Mammary epithelial cell (primary cell): ENCODE measurements at regions of chr1 and their contacts with region 1.

Region 1: DNA sequence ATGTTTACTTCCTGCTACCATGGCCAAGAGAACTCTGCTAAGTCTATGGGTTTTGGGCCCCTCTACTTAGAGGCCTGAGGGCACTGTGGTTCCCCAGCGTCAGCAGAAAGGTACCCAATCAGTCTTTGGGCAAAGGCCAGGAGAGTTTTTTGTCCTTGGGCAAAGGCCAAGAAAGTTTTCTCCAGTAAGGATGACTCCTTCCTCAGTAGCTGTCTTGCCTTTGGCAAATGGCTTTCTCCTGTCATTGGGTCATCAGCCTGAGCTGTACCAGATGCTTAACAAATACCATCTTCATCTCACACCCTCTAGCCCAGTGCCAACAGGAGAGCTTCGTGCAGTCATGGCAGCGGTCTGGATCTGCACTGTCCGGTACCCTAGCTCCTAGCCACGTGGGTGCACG is 199.3 kb upstream of the TMEM51 start:
- DNase-seq: peak; percentile 66
- H3K4me3 ChIP-seq: no peak overlapping the region
- H3K27ac ChIP-seq: no peak overlapping the region
- H3K4me1 ChIP-seq: peaks cover 7% of the 10 kb centered on the region
- H3K27me3 ChIP-seq: no peaks in the 10 kb centered on the region
- CTCF ChIP-seq: no peak

Region 2: GRCh38 chr1:14894811-14895560 is 59.2 kb before region 1 on chr1:
- CTCF ChIA-PET with region 1: no interaction called
- dilution Hi-C with region 1: loop called (anchors 5 kb)
- in situ Hi-C with region 1: no loop called
- intact Hi-C with region 1: no loop called
- DNase-seq: no peak
- H3K4me3 ChIP-seq: no peak overlapping the region
- H3K27ac ChIP-seq: no peak overlapping the region
- H3K4me1 ChIP-seq: peaks cover 31% of the 10 kb centered on the region
- H3K27me3 ChIP-seq: no peaks in the 10 kb centered on the region
- CTCF ChIP-seq: no peak

Region 3: DNA sequence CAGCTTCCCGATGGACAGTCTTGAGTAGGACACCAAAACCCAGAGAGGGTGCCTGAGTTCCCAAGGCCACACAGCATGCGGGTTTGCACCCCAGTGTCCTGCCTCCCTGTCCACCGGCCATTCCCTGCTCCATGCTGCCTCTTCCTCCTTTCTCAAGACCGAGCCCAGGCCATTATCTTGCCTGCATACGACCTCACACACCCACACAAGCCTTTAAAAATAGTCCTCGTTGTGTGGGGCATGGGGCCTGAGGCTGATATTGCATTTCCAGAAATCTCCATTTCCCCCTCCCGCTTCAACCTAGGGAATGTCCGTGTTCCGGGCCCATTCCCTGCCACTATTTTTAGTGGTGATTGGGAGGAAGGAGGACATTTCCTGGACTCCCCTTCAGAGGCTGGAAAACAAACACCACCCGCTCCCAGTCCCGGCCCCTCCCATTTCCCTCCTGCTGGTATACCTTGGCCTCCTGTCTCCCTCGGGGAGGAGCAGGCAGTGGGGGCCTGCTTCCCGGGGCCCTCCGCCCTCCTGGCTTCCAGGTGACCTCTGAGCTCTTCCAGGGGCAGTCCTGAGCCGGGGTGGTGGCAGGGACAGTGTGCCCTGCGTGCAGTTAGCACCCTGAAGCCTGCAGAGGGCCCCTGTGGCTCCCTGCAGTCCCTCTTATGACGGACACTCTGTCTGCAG is 67.0 kb after region 1 on chr1:
- CTCF ChIA-PET with region 1: no interaction called
- dilution Hi-C with region 1: loop called (anchors 5 kb)
- in situ Hi-C with region 1: no loop called
- intact Hi-C with region 1: no loop called
- DNase-seq: no peak
- H3K4me3 ChIP-seq: no peak overlapping the region
- H3K27ac ChIP-seq: peak overlapping the region; percentile 74
- H3K4me1 ChIP-seq: peaks cover 29% of the 10 kb centered on the region
- H3K27me3 ChIP-seq: no peaks in the 10 kb centered on the region
- CTCF ChIP-seq: no peak

Region 4: GRCh38 chr1:15083578-15083977 is 129.4 kb after region 1 on chr1:
- CTCF ChIA-PET with region 1: no interaction called
- dilution Hi-C with region 1: loop called (anchors 5 kb)
- in situ Hi-C with region 1: no loop called
- intact Hi-C with region 1: no loop called
- DNase-seq: peak; percentile 47
- H3K4me3 ChIP-seq: no peak overlapping the region
- H3K27ac ChIP-seq: no peak overlapping the region
- H3K4me1 ChIP-seq: no peaks in the 10 kb centered on the region
- H3K27me3 ChIP-seq: no peaks in the 10 kb centered on the region
- CTCF ChIP-seq: no peak